Activated naive CD4-positive, alpha-beta T cell treated with anti-CD3 and anti-CD28 coated beads for 36 hours (primary cell): ENCODE measurements at regions of chr15 and their contacts with region 1.

Region 1: DNA sequence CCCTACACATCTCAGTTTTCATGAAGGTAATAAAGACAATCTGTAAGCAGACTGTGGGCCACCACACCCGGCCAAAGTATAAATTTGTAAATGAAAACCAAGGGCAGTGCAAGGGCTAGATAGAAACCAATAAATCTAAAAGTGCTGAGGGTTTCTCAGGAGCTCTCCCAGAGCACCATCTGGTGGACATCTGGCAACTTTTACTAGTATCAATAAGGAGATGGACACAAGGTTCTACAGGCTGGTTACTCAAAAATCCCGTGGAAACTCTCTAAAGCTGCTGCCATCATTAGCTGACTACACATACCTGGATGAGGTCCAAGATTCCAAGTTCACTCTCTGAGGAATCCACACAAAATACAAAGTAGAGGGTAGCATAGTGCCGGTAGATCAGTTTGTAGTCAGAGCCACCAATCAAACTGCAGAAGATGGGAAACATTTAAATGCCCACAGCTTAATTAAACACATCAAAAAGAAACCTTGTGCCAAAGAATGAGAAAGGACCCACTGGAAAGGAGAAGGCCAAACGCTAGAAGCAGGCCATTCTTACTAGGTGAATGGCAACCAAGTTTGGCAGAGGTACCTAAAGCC is 5.5 kb downstream of the AP3S2 start:
- DNase-seq: no peak
- H3K4me3 Mint-ChIP-seq: no peak overlapping the region
- H3K27ac Mint-ChIP-seq: no peak overlapping the region
- H3K4me1 Mint-ChIP-seq: peaks cover 23% of the 10 kb centered on the region
- H3K27me3 Mint-ChIP-seq: no peaks in the 10 kb centered on the region

Region 2: DNA sequence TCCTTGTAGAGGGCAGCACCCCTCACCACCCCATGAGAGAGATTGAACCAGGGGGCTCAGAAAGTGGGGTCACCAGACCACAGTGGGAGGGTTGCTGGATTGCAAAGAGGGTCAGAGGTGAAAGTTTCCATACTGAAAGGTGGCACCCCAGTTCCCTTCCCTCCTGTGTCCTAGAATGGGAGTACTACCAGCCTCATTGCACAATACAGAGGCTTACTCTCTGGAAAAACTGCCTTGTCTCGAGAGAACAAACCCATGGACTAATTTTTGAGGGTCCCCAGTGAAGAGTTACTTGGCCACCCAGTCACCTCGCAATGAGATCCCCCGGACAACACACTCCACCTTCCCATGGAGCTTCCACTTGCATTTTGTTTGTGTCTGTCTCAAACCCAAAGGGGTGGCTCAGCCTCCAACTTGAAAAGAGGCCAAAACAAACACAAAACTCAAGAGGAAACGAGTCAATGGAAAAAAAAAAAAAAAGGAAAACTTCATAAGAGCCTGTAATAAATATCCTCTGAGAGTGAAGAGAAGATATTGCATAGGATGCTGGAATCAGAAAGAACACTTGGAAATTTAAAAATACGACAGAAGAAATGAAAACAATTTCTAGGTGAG is 93.6 kb before region 1 on chr15:
- CTCF ChIA-PET with region 1: interaction called, 10 read pairs
- intact Hi-C with region 1: no loop called
- DNase-seq: no peak
- H3K4me3 Mint-ChIP-seq: no peak overlapping the region
- H3K27ac Mint-ChIP-seq: no peak overlapping the region
- H3K4me1 Mint-ChIP-seq: no peaks in the 10 kb centered on the region
- H3K27me3 Mint-ChIP-seq: peaks cover 3% of the 10 kb centered on the region